Aorta (tissue), 5 donors: ENCODE measurements at regions of chr1 and their contacts with region 1.

Region 1: DNA sequence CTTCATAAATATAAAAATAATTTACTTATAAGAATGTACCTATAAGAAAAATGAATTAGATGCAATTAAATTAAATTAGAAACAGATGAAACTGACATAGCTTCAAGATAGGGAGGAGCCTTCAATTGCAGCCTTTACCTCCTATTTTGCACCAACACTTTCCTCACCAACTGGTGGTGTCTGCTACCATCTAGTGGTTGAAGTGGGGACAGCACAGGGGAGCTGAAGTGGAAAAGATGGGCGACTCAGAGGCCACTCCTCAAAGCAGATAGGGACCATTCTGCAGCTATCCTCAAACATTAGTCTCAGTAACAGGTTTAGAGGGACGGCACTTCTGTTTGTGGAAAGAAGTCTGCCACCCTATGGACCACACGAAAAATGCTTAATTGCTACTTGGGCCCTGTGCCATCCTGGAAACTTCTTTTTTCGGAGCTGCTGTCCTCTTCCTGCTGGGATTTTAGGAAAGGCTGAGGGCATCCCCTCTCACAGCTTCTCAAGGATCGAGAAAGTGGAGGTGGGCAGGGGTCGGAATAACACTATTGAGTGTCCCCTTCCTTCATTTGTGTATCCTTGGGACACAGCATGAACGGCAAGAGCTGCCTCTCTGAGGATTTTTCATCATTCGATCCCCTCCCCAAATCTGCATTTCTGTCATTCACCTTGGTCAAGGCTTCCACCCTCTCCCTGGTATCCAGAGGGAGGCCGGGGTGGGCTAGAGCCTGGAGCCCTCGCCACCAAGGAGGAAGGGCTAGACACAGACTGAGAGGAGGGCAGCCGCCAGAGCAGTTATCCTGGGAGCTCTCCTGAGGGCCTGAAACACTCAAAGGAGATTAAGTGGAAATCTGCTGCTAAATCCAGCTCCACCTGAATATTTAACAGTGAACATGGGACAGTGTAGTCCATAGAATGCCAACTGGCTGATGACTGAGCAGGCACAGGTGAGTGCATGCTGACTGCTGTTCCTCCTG is 9.6 kb downstream of the PROK1 start:
- DNase-seq: peak; percentile 76 to 82
- ATAC-seq: peak; percentile 90
- H3K4me3 ChIP-seq: no peak overlapping the region
- H3K27ac ChIP-seq: no peak overlapping the region
- H3K4me1 ChIP-seq: no peaks in the 10 kb centered on the region
- H3K27me3 ChIP-seq: no peaks in the 10 kb centered on the region

Region 2: DNA sequence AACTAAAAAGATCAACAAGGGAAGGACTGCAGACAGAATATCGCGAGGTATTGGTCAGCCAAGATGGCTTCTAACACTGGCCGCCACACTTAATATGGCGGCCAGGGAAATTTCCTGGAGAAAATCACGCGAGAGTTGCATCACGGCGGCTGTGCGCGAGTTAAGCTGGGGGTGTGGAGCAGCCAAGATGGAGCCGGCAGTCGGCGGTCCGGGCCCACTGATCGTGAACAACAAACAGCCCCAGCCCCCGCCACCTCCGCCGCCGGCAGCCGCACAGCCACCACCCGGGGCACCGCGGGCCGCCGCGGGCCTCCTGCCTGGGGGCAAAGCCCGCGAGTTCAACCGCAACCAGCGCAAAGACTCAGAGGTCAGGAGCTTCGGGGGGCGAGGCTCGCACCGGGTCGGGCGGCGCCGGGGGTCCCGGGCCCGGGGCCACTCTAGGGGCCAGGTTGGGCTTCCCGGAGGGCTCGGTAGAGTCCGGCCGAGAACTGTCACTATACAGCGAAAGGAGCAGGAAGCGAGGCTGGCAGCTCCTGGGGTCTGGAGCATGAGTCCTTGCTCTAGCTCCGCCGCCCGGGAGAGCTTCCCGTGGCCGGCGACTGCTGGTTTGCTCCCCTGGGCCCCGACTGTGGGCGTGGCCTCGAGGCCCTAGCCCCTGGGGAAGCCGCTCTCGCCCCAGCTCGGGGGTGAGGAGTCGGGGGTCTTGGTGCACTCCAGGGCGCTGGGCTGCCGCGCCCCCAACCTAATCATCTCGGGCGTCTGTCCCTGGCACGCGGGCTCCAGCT is 425.9 kb before region 1 on chr1 and contains the start of gene STRIP1:
- intact Hi-C with region 1: loop called in 1 of 2 experiments (anchors 5 kb)
- DNase-seq: peak; percentile 96
- ATAC-seq: peak; percentile 98
- H3K4me3 ChIP-seq: peak within 1 kb of the TSS; percentile 86 to 99
- H3K27ac ChIP-seq: peak within 1 kb of the TSS in 1 of 2 donors; percentile 49
- H3K4me1 ChIP-seq: no peaks in the 10 kb centered on the region
- H3K27me3 ChIP-seq: no peaks in the 10 kb centered on the region
- total RNA-seq, gene STRIP1: 28.6 to 45.9 TPM

Region 3: DNA sequence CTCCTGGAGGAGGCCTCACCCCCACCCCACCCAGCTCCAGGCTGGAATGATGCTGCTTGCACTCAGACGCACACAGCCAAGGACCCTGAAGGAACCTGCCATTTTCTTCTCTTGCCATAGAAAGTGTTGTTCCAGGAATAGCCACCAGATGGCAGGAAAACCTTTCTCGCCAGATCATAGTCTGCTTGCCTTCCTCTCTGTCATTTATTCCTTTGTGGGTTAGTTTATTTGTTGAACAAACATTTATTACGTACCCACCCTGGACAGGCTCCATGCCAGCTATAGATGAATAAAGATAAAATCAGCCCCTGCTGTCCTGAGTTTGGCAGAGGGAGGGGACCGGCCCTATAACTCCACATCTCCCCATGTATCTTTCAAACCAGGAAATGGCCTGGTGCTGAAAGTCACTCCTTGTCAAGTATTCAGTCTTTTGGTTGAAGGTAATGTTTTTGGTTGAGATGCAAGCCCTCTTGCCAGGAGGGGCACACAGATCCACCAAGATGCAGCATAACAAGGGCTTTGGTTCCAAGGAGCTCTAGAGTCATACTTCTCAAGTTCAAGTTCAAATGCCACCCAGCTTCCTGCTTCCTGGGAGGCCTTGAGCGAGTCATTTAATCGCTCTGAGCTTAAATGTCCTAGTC is 257.4 kb before region 1 on chr1:
- intact Hi-C with region 1: loop called (anchors 2 kb)
- DNase-seq: no peak
- ATAC-seq: peak; percentile 47
- H3K4me3 ChIP-seq: no peak overlapping the region
- H3K27ac ChIP-seq: no peak overlapping the region
- H3K4me1 ChIP-seq: no peaks in the 10 kb centered on the region
- H3K27me3 ChIP-seq: no peaks in the 10 kb centered on the region

Region 4: GRCh38 chr1:110412576-110412975 is 48.0 kb before region 1 on chr1:
- intact Hi-C with region 1: loop called (anchors 1 to 2 kb)
- DNase-seq: peak; percentile 75 to 87
- ATAC-seq: peak; percentile 82
- H3K4me3 ChIP-seq: no peak overlapping the region
- H3K27ac ChIP-seq: no peak overlapping the region
- H3K4me1 ChIP-seq: no peaks in the 10 kb centered on the region
- H3K27me3 ChIP-seq: no peaks in the 10 kb centered on the region

Region 5: DNA sequence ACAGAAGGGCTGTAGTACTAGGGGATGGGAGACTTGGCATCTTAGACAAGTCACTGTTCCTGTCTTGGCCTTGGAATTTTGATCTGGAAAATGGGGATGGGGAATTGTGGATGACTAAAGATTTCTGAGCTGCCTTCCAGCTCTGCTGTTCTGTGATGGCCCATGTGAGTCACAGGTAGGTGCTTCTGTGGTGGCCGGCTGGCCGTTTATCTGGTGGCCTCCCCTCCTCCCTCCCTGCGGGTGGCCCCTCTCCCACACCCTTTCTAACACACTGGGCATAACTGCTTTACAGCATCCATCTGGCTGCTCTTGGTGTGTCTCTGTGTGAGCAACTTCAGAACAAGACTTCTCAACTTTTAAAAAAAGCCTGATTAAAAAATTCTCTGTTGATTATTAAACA is 109.8 kb after region 1 on chr1:
- intact Hi-C with region 1: no loop called
- DNase-seq: no peak
- ATAC-seq: no peak
- H3K4me3 ChIP-seq: no peak overlapping the region
- H3K27ac ChIP-seq: no peak overlapping the region
- H3K4me1 ChIP-seq: no peaks in the 10 kb centered on the region
- H3K27me3 ChIP-seq: no peaks in the 10 kb centered on the region

Region 6: GRCh38 chr1:110766025-110766647 is 305.6 kb after region 1 on chr1:
- intact Hi-C with region 1: no loop called
- DNase-seq: no peak
- ATAC-seq: no peak
- H3K4me3 ChIP-seq: no peak overlapping the region
- H3K27ac ChIP-seq: no peak overlapping the region
- H3K4me1 ChIP-seq: no peaks in the 10 kb centered on the region
- H3K27me3 ChIP-seq: peaks cover 0 to 1% of the 10 kb centered on the region in 2 donors

Region 7: GRCh38 chr1:111176678-111177077 is 716.1 kb after region 1 on chr1:
- intact Hi-C with region 1: no loop called
- DNase-seq: no peak
- ATAC-seq: no peak
- H3K4me3 ChIP-seq: no peak overlapping the region
- H3K27ac ChIP-seq: no peak overlapping the region
- H3K4me1 ChIP-seq: no peaks in the 10 kb centered on the region
- H3K27me3 ChIP-seq: no peaks in the 10 kb centered on the region